GM12878 (cell line): ENCODE measurements at regions of chr16 and their contacts with region 1.

Region 1: GRCh38 chr16:22829997-22830396 is 16.0 kb downstream of the HS3ST2 start:
- DNase-seq: no peak
- ATAC-seq: no peak
- H3K4me3 ChIP-seq: no peak overlapping the region
- H3K27ac ChIP-seq: no peak overlapping the region
- H3K4me1 ChIP-seq: no peaks in the 10 kb centered on the region
- H3K27me3 ChIP-seq: no peaks in the 10 kb centered on the region
- CTCF ChIP-seq: no peak
- EP300 ChIP-seq: no peak
- POLR2A ChIP-seq: no peak
- RAD21 ChIP-seq: no peak

Region 2: GRCh38 chr16:22763437-22764080 is 66.4 kb before region 1 on chr16:
- CTCF ChIA-PET with region 1: no interaction called
- POLR2A ChIA-PET with region 1: no interaction called
- RAD21 ChIA-PET with region 1: no interaction called
- SMC1A ChIA-PET with region 1: interaction called, 3 read pairs
- in situ Hi-C with region 1: no loop called
- intact Hi-C with region 1: loop called (anchors 10 kb)
- DNase-seq: no peak
- ATAC-seq: no peak
- H3K4me3 ChIP-seq: no peak overlapping the region
- H3K27ac ChIP-seq: no peak overlapping the region
- H3K4me1 ChIP-seq: no peaks in the 10 kb centered on the region
- H3K27me3 ChIP-seq: no peaks in the 10 kb centered on the region; a peak in 1 of 4 replicates
- CTCF ChIP-seq: no peak
- EP300 ChIP-seq: no peak
- POLR2A ChIP-seq: no peak
- RAD21 ChIP-seq: no peak